Activated CD4-positive, alpha-beta T cell treated with anti-CD3 and anti-CD28 coated beads, Interleukin-2, amount 10 ng/mL, durations not matched to agents 24 days and 14 days (primary cell): ENCODE measurements at regions of chr1 and their contacts with region 1.

Region 1: GRCh38 chr1:209784265-209785169 is at the start of gene C1orf74:
- DNase-seq: peak; percentile 100
- H3K4me3 Mint-ChIP-seq: peak within 1 kb of the TSS; percentile 98
- H3K27ac Mint-ChIP-seq: peak within 1 kb of the TSS; percentile 99
- H3K4me1 Mint-ChIP-seq: peaks cover 51% of the 10 kb centered on the region
- H3K27me3 Mint-ChIP-seq: peaks cover 3% of the 10 kb centered on the region
- total RNA-seq, gene C1orf74: 2.4 and 3.2 TPM in 2 replicates

Region 2: GRCh38 chr1:209755926-209756614 is 28.4 kb before region 1 on chr1 and contains the start of gene TRAF3IP3:
- intact Hi-C with region 1: loop called (anchors 1 kb)
- DNase-seq: peak; percentile 94
- H3K4me3 Mint-ChIP-seq: peak within 1 kb of the TSS; percentile 94
- H3K27ac Mint-ChIP-seq: peak within 1 kb of the TSS; percentile 98
- H3K4me1 Mint-ChIP-seq: peaks cover 69% of the 10 kb centered on the region
- H3K27me3 Mint-ChIP-seq: no peaks in the 10 kb centered on the region
- total RNA-seq, gene TRAF3IP3: 392 and 394 TPM in 2 replicates

Region 3: DNA sequence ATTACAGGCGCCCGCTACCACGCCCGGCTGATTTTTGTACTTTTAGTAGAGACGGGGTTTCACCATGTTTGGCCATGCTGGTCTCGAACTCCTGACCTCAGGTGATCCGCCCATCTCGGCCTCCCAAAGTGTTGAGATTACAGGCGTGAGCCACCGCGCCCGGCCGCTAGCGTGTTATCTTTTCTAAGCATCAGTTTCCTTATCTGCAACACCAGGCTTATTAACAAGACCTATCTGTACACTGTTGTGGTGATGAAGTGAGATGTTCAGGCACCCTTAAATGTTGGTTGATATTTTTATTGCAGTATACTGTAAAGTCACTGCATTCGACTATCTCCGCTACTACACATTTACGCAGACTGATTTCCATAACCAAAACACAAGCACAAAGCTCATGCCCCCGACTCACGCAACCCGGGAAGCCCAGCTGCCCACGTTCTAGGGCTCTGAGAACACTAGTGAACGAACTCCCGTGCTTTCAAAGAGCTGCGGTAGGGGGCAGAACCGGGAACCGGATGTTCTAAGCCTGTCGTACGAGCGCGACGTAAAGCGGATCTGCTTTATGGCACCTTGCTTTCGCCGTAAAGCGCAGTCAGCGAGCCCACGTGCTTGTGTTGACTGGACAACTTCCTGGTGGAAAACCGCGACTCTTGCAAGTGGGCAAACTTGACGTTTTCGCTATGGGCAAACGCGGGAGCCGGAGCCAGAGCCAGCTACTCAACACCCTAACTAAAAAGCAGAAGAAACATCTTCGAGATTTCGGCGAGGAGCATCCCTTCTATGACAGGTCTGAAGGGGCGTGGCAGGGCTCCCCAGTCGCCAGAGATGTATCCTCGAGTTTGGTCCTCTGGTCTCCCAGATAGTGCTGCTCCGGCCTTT is 43.1 kb after region 1 on chr1 and contains the start of gene UTP25:
- intact Hi-C with region 1: loop called (anchors 1 kb)
- DNase-seq: peak; percentile 98
- H3K4me3 Mint-ChIP-seq: peak within 1 kb of the TSS; percentile 93
- H3K27ac Mint-ChIP-seq: peak within 1 kb of the TSS; percentile 86
- H3K4me1 Mint-ChIP-seq: peaks cover 43% of the 10 kb centered on the region
- H3K27me3 Mint-ChIP-seq: peaks cover 4% of the 10 kb centered on the region
- total RNA-seq, gene UTP25: 17.2 and 17.6 TPM in 2 replicates

Region 4: GRCh38 chr1:210311726-210312493 is 527.4 kb after region 1 on chr1:
- intact Hi-C with region 1: no loop called
- DNase-seq: no peak
- H3K4me3 Mint-ChIP-seq: peak overlapping the region; percentile 76
- H3K27ac Mint-ChIP-seq: no peak overlapping the region
- H3K4me1 Mint-ChIP-seq: peaks cover 4% of the 10 kb centered on the region
- H3K27me3 Mint-ChIP-seq: peaks cover 32% of the 10 kb centered on the region